Natural killer cell (primary cell): ENCODE measurements at regions of chr10 and their contacts with region 1.

Region 1: DNA sequence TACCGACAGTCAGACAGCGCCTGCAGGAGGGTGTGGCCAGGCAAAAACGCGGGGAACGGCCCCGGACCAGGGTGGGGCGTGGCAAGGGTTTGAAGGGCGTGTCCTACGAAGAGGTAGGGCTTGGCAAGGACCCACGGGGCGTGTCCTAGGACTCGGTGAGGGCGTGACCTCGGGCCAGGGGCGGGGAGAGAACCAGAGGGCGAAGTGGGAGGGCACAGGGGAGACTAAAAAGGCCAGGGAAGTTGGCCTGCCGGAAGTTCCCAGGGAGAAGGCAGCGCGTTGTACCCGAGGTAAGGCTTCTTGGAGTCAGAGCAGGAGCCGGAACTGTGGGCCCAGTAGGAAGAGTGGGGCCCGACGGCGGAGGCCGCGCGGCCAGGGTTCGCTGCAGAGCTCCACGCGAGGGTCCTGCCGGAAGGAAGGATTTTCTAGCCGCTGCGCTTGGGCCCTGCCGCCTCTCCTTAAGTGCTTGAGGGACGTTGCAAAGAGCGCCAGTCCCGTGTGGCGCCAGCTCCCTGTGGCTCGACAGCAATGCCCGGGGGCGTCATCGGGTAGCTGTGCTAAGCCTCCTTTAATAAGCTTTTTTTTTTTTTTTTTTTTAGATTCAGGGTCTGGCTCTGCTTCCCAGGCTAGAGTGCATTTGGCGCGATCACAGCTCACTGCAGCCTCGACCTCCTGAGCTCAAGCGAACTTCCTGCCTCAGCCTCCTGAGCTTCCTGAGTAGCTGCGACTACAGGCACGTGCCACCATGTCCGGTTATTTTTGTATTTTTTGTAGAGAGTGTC is at the start of gene PTER:
- DNase-seq: peak; percentile 88 to 97
- ATAC-seq: peak; percentile 99
- H3K4me3 ChIP-seq: peak within 1 kb of the TSS; percentile 63
- H3K4me3 Mint-ChIP-seq: peak within 1 kb of the TSS; percentile 91
- H3K27ac ChIP-seq: peak within 1 kb of the TSS; percentile 66
- H3K27ac Mint-ChIP-seq: peak within 1 kb of the TSS; percentile 82 to 93
- H3K4me1 ChIP-seq: peaks cover 28% of the 10 kb centered on the region
- H3K4me1 Mint-ChIP-seq: peaks cover 45 to 49% of the 10 kb centered on the region in 2 donors
- H3K27me3 ChIP-seq: no peaks in the 10 kb centered on the region
- H3K27me3 Mint-ChIP-seq: no peaks in the 10 kb centered on the region
- CTCF ChIP-seq: no peak
- total RNA-seq, gene PTER: 12.8 to 21.9 (median 21.5) TPM

Region 2: GRCh38 chr10:16449454-16449853 is 12.5 kb after region 1 on chr10:
- intact Hi-C with region 1: no loop called
- DNase-seq: no peak
- ATAC-seq: no peak
- H3K4me3 ChIP-seq: no peak overlapping the region
- H3K4me3 Mint-ChIP-seq: no peak overlapping the region
- H3K27ac ChIP-seq: no peak overlapping the region
- H3K27ac Mint-ChIP-seq: no peak overlapping the region
- H3K4me1 ChIP-seq: no peaks in the 10 kb centered on the region
- H3K4me1 Mint-ChIP-seq: peaks cover 12 to 22% of the 10 kb centered on the region in 2 donors
- H3K27me3 ChIP-seq: no peaks in the 10 kb centered on the region
- H3K27me3 Mint-ChIP-seq: no peaks in the 10 kb centered on the region
- CTCF ChIP-seq: no peak

Region 3: GRCh38 chr10:16470747-16471146 is 33.8 kb after region 1 on chr10:
- intact Hi-C with region 1: loop called (anchors 2 kb)
- DNase-seq: peak; percentile 29 to 40
- ATAC-seq: peak; percentile 93 to 100 (median 99)
- H3K4me3 ChIP-seq: no peak overlapping the region
- H3K4me3 Mint-ChIP-seq: peak overlapping the region; percentile 74
- H3K27ac ChIP-seq: peak overlapping the region; percentile 69
- H3K27ac Mint-ChIP-seq: peak overlapping the region; percentile 69 to 89
- H3K4me1 ChIP-seq: peaks cover 8% of the 10 kb centered on the region
- H3K4me1 Mint-ChIP-seq: peaks cover 23 to 25% of the 10 kb centered on the region in 2 donors
- H3K27me3 ChIP-seq: no peaks in the 10 kb centered on the region
- H3K27me3 Mint-ChIP-seq: no peaks in the 10 kb centered on the region
- CTCF ChIP-seq: no peak